ENCODE measurements at regions of chr3 and their contacts with region 1.

Region 1: GRCh38 chr3:197298341-197298857 is at the start of gene DLG1:
- DNase-seq: peak; percentile 95
- H3K4me3 ChIP-seq: peak within 1 kb of the TSS; percentile 78 to 96 (median 89)
- H3K27ac ChIP-seq: peak within 1 kb of the TSS; percentile 86
- H3K4me1 ChIP-seq: peaks cover 34% of the 10 kb centered on the region
- H3K27me3 ChIP-seq: no peaks in the 10 kb centered on the region
- CTCF ChIP-seq: no peak
- total RNA-seq, gene DLG1: 115 to 157 TPM

Region 2: GRCh38 chr3:197256836-197257444 is 41.5 kb before region 1 on chr3:
- CTCF ChIA-PET with region 1: interaction called, 3 read pairs
- dilution Hi-C with region 1: no loop called
- in situ Hi-C with region 1: no loop called
- intact Hi-C with region 1: loop called (anchors 2 kb)
- DNase-seq: peak; percentile 24
- H3K4me3 ChIP-seq: no peak overlapping the region
- H3K27ac ChIP-seq: peak overlapping the region; percentile 43
- H3K4me1 ChIP-seq: peaks cover 19% of the 10 kb centered on the region
- H3K27me3 ChIP-seq: no peaks in the 10 kb centered on the region
- CTCF ChIP-seq: peak; percentile 62 to 70

Region 3: GRCh38 chr3:197317250-197317963 is 19.0 kb after region 1 on chr3:
- CTCF ChIA-PET with region 1: no interaction called
- dilution Hi-C with region 1: no loop called
- in situ Hi-C with region 1: no loop called
- intact Hi-C with region 1: loop called (anchors 1 kb)
- DNase-seq: peak; percentile 89
- H3K4me3 ChIP-seq: peak overlapping the region; percentile 8 to 36 (median 23)
- H3K27ac ChIP-seq: peak overlapping the region; percentile 66
- H3K4me1 ChIP-seq: peaks cover 19% of the 10 kb centered on the region
- H3K27me3 ChIP-seq: no peaks in the 10 kb centered on the region
- CTCF ChIP-seq: no peak

Region 4: GRCh38 chr3:197339841-197340520 is 41.6 kb after region 1 on chr3:
- CTCF ChIA-PET with region 1: interaction called, 6 read pairs
- dilution Hi-C with region 1: no loop called
- in situ Hi-C with region 1: no loop called
- intact Hi-C with region 1: loop called (anchors 5 kb)
- DNase-seq: peak; percentile 13
- H3K4me3 ChIP-seq: no peak overlapping the region
- H3K27ac ChIP-seq: no peak overlapping the region
- H3K4me1 ChIP-seq: peaks cover 11% of the 10 kb centered on the region
- H3K27me3 ChIP-seq: no peaks in the 10 kb centered on the region
- CTCF ChIP-seq: no peak

Region 5: DNA sequence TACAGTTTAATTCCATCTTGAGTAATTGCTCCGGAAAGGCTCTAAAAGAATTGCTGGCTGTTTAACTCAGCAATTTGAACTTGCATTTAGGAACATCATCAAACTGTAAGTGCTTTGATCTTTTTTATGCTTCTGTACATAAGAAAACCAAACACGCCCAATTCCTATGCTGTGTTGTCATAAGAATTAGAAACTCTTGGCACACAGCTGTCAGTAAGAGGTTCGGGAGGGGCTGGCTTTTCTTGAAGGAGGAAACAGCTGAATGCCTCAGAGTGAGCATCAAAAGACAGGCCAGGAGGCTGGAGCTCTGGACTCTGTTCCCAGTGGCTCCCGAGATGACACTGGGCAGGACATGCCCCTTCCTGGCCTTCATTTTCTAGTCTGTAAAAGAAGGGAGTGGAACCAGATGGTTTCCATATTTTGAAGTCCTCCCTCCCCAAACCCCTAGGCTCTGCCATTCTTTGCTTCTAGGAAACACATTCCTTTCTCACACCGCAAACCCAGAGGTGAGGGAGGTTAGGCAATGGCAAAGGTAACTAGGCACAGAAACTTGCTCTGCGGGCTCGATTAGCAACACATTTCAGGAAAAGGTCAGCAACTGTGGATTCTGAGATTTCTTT is 73.8 kb after region 1 on chr3:
- CTCF ChIA-PET with region 1: no interaction called
- dilution Hi-C with region 1: loop called (anchors 5 kb)
- in situ Hi-C with region 1: loop called in 1 of 2 experiments (anchors 5 kb)
- intact Hi-C with region 1: loop called (anchors 1 kb)
- DNase-seq: peak; percentile 93
- H3K4me3 ChIP-seq: no peak overlapping the region
- H3K27ac ChIP-seq: peak overlapping the region; percentile 63
- H3K4me1 ChIP-seq: peaks cover 56% of the 10 kb centered on the region
- H3K27me3 ChIP-seq: no peaks in the 10 kb centered on the region
- CTCF ChIP-seq: no peak

Region 6: GRCh38 chr3:197394464-197395321 is 96.3 kb after region 1 on chr3:
- CTCF ChIA-PET with region 1: no interaction called
- dilution Hi-C with region 1: no loop called
- in situ Hi-C with region 1: no loop called
- intact Hi-C with region 1: loop called (anchors 1 kb)
- DNase-seq: peak; percentile 100
- H3K4me3 ChIP-seq: no peak overlapping the region
- H3K27ac ChIP-seq: peak overlapping the region; percentile 88
- H3K4me1 ChIP-seq: peaks cover 27% of the 10 kb centered on the region
- H3K27me3 ChIP-seq: no peaks in the 10 kb centered on the region
- CTCF ChIP-seq: no peak

Region 7: DNA sequence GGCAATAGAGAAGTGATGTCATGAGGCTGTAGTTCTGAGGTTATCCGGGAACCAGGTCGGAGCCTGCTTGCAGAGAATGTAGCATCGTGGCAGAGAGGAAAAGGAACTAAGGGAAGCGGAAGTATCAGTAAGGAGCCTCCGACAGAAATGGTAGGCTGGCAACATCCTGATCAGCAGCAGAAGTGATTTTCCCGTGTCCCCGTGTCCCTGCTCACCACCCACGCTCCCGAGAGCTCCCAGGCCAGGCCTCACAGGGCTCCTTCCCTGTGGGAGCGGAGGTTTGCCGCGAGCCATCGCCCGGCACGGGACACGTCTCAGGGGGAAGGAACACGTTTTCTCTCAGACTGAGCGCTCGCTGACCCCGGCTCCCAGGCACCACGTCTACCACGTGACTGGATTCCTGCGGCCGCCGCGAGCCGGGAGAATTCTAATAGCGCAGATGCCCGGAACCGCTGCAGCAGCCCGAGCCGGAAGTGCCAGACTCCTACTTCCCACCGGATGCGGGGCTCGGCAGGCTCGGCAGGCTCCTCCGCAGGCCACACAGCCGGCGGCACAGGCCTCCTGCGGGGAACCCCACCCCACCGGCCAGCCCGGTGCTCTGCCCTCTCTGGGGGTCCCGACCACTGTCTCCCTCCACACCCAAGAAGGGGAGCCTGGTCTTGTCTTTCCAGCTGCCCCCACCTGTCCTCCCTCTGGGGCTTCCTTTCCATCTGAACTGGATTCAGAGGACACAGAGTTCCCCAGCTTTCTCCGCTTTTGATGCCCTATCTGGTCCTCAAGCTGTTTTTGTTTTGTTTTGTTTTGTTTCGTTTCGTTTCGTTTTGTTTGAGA is 158.1 kb after region 1 on chr3:
- CTCF ChIA-PET with region 1: no interaction called
- dilution Hi-C with region 1: no loop called
- in situ Hi-C with region 1: no loop called
- intact Hi-C with region 1: loop called (anchors 1 kb)
- DNase-seq: peak; percentile 73
- H3K4me3 ChIP-seq: peak overlapping the region; percentile 22 to 47 (median 38)
- H3K27ac ChIP-seq: peak overlapping the region; percentile 23
- H3K4me1 ChIP-seq: peaks cover 11% of the 10 kb centered on the region
- H3K27me3 ChIP-seq: no peaks in the 10 kb centered on the region
- CTCF ChIP-seq: no peak